Mucosa of descending colon (tissue), 3 donors: ENCODE measurements at regions of chr12 and their contacts with region 1.

Region 1: GRCh38 chr12:121614872-121615467 is 11.4 kb upstream of the ORAI1 start:
- DNase-seq: no peak
- ATAC-seq: no peak
- H3K4me3 ChIP-seq: no peak overlapping the region
- H3K4me1 ChIP-seq: no peaks in the 10 kb centered on the region
- CTCF ChIP-seq: no peak

Region 2: DNA sequence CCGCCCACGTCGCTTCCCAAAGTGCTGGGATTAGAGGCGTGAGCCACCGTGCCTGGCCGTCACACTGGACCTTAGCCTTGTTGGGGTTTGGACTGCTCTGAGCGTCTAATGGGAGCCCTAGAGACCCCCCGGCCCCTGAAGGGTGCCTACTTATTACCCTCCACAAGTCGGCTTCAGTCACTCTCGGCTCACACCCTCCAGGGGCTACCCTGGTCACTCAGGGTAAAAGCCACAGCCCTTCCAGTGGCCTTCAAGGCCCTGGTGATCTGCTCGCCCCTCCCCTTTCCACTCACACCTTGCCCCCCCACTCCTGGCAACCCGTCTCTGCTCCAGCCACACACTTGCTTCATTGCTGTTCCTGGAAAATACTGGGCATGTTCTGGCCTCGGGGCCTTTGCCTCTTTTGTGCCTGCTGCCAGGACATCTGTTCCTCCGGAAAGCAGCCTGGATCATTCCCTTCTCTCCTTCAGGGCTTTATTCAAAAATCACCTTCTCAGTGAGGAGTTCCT is 58.1 kb after region 1 on chr12:
- intact Hi-C with region 1: loop called in 1 of 2 experiments (anchors 5 kb)
- DNase-seq: peak; percentile 35 to 66 (median 51)
- ATAC-seq: peak; percentile 62
- H3K4me3 ChIP-seq: no peak overlapping the region
- H3K4me1 ChIP-seq: peaks cover 11% of the 10 kb centered on the region
- CTCF ChIP-seq: no peak